Endothelial cell of umbilical vein (primary cell): ENCODE measurements at regions of chr5 and their contacts with region 1.

Region 1: DNA sequence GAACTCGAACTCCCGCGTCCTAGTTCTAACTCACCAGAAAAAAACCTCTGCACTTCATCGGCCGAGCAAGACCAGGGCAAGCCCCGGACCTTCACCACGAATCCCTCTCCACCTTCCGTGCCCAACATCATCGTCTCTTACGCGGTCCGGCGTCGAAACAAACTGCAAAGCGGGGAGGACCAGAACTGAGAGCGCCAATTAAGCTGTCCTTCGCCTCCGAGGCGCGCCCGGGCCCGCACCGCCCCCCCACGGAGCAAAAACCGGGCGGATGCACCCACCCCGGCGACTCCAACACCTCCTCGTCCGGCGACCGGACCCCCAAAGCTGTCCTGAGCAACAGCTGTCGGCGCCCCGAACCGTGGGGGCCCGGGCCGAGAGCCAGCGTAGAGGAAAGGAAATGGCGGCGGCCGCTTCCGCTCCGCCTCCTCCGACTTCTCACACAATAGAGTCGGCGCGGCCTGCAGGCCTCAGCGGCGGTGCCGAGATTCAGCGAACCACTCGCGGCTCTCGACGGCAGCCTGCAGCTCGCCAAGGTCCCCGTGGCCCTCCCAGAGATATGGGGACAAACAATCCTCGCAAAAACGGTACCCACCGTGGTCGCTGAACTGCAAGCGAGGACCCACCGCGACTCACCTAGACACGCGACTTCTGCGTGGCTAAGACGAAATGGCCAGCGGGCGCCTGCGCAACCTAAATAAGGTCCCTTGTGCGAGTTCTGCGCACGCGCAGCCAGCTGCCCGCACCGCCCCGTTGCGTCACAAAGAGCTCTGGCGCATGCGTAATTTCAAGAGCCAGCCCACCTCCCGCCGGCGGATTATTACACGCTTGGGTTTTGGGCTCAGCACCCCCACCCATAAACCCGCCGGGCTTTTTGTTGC is at the start of gene HNRNPH1:
- DNase-seq: peak; percentile 100
- H3K4me3 ChIP-seq: peak within 1 kb of the TSS; percentile 85 to 95 (median 94)
- H3K27ac ChIP-seq: peak within 1 kb of the TSS; percentile 97
- H3K4me1 ChIP-seq: peaks cover 39% of the 10 kb centered on the region
- H3K27me3 ChIP-seq: no peaks in the 10 kb centered on the region
- CTCF ChIP-seq: no peak
- POLR2A ChIP-seq: peak; percentile 100
- total RNA-seq, gene HNRNPH1: 969 and 993 TPM in 2 replicates

Region 2: DNA sequence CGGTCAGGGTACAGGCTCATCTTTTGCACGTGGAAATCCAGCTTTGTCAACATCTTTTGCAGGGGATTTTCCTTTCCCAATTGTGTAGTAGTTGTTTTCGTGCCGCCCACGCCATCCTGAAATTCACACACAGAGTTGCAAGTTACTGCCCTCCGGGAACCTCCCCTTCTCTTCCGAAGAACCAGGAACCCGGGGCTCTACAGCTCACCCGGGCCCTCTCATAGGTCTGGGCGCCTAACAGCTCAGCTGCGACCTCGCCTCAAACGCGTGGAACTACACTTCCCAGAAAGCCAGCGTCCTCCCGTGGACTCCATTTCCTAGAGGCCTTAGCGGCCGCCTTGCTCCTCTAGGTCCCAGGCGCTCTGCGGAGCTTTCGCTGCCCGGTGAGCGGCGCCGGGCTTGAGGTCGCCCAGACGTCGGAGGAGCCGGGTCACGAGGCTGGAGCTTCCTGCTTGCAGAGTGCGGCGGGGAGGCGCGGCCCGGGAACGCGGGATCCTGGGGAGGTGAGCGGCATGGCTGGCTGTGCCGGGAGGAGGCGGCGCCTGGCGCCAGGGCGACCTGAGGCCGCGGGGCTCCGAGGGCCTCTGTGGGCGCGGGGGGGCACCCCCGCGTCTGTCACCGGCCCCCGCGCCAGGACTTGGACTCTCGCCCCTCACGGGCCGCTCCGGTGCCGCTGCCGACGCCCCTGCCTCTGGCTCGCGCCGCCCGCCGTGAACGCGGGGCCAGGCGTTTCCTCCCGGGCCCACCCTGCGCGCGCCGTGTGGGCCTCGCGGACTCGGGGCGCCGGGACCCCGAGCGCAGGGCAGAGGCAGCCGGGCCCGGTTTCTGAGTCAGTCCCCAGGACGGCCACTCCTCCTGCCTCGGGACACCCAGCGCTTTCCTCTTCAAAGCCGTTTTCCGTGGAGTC is 763.4 kb before region 1 on chr5 and contains the start of gene ZNF354B:
- CTCF ChIA-PET with region 1: no interaction called
- POLR2A ChIA-PET with region 1: no interaction called
- dilution Hi-C with region 1: no loop called
- intact Hi-C with region 1: loop called (anchors 1 kb)
- DNase-seq: peak; percentile 98
- H3K4me3 ChIP-seq: peak within 1 kb of the TSS; percentile 22 to 78 (median 38)
- H3K27ac ChIP-seq: peak within 1 kb of the TSS; percentile 53
- H3K4me1 ChIP-seq: no peaks in the 10 kb centered on the region
- H3K27me3 ChIP-seq: no peaks in the 10 kb centered on the region
- CTCF ChIP-seq: no peak
- POLR2A ChIP-seq: peak; percentile 63
- total RNA-seq, gene ZNF354B: 16.3 and 17.6 TPM in 2 replicates

Region 3: GRCh38 chr5:179608131-179608581 is 15.1 kb before region 1 on chr5:
- CTCF ChIA-PET with region 1: interaction called, 3 read pairs
- POLR2A ChIA-PET with region 1: interaction called, 30 read pairs
- dilution Hi-C with region 1: no loop called
- intact Hi-C with region 1: no loop called
- DNase-seq: no peak
- H3K4me3 ChIP-seq: no peak overlapping the region
- H3K27ac ChIP-seq: no peak overlapping the region
- H3K4me1 ChIP-seq: no peaks in the 10 kb centered on the region
- H3K27me3 ChIP-seq: no peaks in the 10 kb centered on the region
- CTCF ChIP-seq: no peak
- POLR2A ChIP-seq: no peak

Region 4: DNA sequence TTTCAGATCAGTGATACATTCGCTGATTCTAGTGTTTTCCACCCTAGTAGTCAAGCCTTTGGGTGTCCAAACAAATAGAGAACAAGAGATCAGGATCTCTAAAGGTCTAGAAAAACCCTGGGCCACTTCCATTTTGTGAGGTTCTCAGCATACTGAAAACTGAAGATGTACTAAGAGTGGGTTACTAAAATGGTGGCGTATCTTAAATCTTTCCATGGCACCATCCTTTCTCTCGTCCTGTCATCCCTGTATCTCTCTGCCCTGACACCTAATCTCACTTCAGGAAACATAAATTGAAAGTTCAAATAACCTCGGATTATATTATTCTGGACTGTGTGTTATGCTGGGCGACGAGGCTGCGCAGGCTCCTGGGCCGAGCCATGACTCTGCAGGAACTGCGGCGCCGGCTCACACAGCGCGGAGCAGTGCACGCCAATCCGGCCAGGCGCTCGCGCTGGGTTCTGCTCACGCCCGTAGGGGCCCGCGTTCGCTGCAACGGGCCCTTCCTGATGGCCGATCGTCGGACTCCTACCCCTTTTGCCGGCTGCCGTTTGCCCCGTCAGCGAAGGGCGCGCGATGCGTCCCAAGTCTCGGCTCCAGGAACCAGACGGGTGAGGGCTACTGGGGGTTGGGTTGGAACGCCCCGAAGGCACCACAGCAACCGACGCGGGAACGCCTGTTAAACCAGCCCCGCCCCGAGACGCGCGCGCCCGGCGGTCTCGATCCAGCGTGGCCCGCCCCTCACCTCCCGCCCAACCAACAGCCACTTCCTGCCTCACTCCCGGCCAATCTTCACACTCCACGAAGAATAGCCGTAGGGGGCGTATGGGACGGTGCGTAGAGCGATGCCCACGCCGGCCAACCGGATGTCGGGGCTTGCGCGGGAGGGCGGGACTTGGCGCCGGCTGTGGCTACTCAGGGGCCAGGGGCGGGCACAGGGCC is 75.0 kb after region 1 on chr5:
- CTCF ChIA-PET with region 1: no interaction called
- POLR2A ChIA-PET with region 1: interaction called, 18 read pairs
- dilution Hi-C with region 1: no loop called
- intact Hi-C with region 1: loop called (anchors 2 kb)
- DNase-seq: peak; percentile 100
- H3K4me3 ChIP-seq: peak overlapping the region; percentile 34 to 77 (median 70)
- H3K27ac ChIP-seq: peak overlapping the region; percentile 94
- H3K4me1 ChIP-seq: peaks cover 18% of the 10 kb centered on the region
- H3K27me3 ChIP-seq: no peaks in the 10 kb centered on the region
- CTCF ChIP-seq: no peak
- POLR2A ChIP-seq: peak; percentile 63

Region 5: DNA sequence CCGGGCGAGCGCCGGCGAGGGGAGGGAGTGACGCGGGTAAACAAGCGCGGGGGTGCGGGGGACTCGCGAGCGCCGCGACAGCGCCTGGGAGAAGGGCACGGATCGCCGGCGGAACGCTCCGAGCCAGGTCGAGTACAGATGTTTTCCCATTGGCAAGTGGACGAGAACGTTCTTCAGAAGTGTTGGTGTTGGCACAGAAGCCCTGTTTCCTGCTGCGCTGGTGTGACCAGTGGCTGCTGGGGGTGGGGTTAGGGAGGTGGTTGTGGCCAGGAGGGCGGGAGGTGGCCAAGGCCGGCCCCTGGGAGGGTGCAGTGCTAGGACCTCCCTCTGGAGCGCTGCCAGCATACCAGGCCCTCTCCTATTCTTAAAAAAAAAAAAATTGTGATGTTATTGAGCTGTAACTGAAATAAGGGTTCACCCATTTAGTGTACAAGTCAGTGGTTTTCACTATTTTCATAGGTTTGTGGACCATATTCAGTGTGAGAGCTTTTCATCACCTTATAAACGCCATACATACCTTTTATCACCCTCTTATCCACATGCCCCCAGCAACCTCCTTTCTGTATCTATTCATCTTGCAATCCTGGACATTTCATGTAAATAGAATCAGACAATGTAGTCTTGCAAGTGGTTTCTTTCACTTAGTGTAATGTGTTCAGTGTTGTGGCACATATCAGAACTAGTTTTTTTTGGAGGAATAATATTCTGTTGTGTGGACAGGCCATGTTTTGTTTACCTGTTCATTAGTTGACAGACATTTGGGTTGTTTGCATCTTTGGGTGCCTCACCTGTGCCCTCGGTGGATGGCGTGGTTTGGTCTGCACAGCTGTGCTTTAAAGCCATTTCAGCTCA is 198.6 kb after region 1 on chr5:
- CTCF ChIA-PET with region 1: no interaction called
- POLR2A ChIA-PET with region 1: interaction called, 9 read pairs
- dilution Hi-C with region 1: no loop called
- intact Hi-C with region 1: loop called (anchors 5 kb)
- DNase-seq: peak; percentile 93
- H3K4me3 ChIP-seq: peak overlapping the region; percentile 49 to 90 (median 82)
- H3K27ac ChIP-seq: peak overlapping the region; percentile 96
- H3K4me1 ChIP-seq: peaks cover 37% of the 10 kb centered on the region
- H3K27me3 ChIP-seq: no peaks in the 10 kb centered on the region
- CTCF ChIP-seq: no peak
- POLR2A ChIP-seq: peak; percentile 85